GM13977 (cell line): ENCODE measurements at regions of chr2 and their contacts with region 1.

Region 1: DNA sequence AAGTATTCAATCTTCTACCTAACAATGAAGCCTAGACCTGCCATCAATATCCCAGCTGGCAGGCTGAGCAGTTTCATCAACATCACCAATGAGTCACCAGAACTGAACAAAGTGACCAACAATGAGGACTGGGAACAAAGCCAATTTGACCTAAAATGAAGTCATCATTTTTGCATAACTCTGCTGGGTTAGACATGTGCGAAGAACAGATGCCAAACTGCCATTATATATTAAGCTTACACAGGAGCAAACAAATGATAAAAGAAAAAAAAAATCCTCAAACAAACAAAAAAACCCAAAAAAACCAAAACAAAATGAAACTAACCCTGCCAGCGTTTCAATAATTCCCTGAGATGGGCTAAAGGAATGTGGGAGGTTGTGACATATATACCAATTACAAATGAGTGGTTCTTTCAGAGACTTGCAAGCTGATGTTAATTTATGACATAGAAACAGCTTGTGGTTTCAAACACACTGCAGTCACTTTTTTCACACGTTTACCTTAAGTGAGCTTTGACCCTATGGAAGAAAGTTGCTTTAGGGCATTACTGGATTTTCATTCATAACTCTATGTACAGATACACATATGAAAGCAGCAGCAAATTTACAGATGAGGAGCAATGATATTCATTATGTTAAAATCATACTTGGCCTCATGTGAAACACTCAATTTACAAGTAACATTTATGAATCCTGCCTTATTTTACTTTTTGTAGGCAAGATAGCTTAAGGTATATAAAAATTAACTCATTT is 56.9 kb upstream of the CCDC141 start:
- DNase-seq: peak; percentile 10
- CTCF ChIP-seq: no peak

Region 2: GRCh38 chr2:179031731-179032408 is 75.0 kb before region 1 on chr2:
- in situ Hi-C with region 1: loop called (anchors 10 kb)
- DNase-seq: peak; percentile 30
- CTCF ChIP-seq: no peak